ENCODE measurements at regions of chr1 and their contacts with region 1.

Region 1: GRCh38 chr1:85406887-85407533 is 57.9 kb downstream of the DDAH1 start:
- DNase-seq: no peak
- H3K4me3 ChIP-seq: no peak overlapping the region
- H3K27ac ChIP-seq: peak overlapping the region; percentile 11 to 51 (median 48)
- H3K4me1 ChIP-seq: peaks cover 9 to 53% (median 28%) of the 10 kb centered on the region in 4 donors
- H3K27me3 ChIP-seq: no peaks in the 10 kb centered on the region
- CTCF ChIP-seq: no peak
- EP300 ChIP-seq: no peak
- POLR2A ChIP-seq: no peak

Region 2: GRCh38 chr1:85224734-85225623 is 182.0 kb before region 1 on chr1:
- intact Hi-C with region 1: no loop called
- DNase-seq: no peak
- H3K4me3 ChIP-seq: no peak overlapping the region
- H3K27ac ChIP-seq: peak overlapping the region; percentile 68 to 78 (median 70)
- H3K4me1 ChIP-seq: peaks cover 15 to 81% (median 68%) of the 10 kb centered on the region in 4 donors
- H3K27me3 ChIP-seq: no peaks in the 10 kb centered on the region
- CTCF ChIP-seq: no peak
- EP300 ChIP-seq: no peak
- POLR2A ChIP-seq: no peak

Region 3: GRCh38 chr1:85580872-85581801 is 174.1 kb after region 1 on chr1:
- intact Hi-C with region 1: loop called (anchors 10 kb)
- DNase-seq: peak; percentile 93
- H3K4me3 ChIP-seq: peak overlapping the region; percentile 80 to 91 (median 88)
- H3K27ac ChIP-seq: peak overlapping the region; percentile 99 to 100 (median 99)
- H3K4me1 ChIP-seq: peaks cover 32 to 66% (median 52%) of the 10 kb centered on the region in 4 donors
- H3K27me3 ChIP-seq: peaks cover 0 to 4% (median 0%) of the 10 kb centered on the region in 4 donors
- CTCF ChIP-seq: peak; percentile 71 to 89 (median 86)
- EP300 ChIP-seq: no peak
- POLR2A ChIP-seq: no peak

Measured in esophagus muscularis mucosa (tissue), 4 donors.